BJ (cell line): ENCODE measurements at regions of chr1 and their contacts with region 1.

Region 1: DNA sequence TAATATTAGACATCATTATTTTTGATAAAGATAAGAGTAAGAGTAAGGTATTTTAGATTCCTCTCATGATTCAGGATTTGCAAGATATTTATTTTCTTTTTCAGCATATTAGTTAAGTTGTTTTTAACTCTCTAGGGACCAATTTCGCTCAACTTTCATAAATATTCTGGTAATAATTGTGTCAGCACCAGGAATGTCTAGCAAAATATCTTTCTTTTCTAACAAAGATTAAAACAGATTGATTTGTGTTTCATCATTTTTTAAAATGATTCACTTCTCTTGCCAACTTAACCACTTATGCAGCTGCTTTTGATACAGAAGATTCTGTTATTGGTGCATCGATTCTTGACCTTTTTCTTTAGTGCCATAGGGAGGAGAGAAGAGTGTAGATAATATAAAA is 172.8 kb upstream of the PTGFR start:
- DNase-seq: no peak
- H3K4me3 ChIP-seq: no peak overlapping the region
- H3K27me3 ChIP-seq: no peaks in the 10 kb centered on the region
- CTCF ChIP-seq: no peak

Region 2: DNA sequence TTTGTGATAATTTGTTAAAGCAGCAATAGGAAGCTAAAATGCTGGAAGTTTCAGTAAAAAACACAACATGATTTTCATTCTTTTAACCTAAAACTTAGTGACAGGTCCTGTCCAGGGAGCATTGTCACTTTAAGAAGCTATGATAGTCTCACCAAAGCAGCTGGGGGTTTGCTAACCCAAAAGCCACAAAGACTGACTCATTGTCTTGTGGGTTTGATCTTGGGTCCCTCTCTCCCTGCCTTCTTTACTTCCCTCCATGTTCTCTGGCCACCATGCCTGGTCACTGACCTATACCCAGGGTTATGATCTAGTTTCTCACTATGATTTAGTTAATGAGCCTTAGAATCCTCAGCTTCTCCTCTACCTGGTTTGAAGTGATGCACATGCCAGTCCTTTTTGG is 40.8 kb before region 1 on chr1:
- CTCF ChIA-PET with region 1: no interaction called
- POLR2A ChIA-PET with region 1: no interaction called
- DNase-seq: no peak
- H3K4me3 ChIP-seq: no peak overlapping the region
- H3K27me3 ChIP-seq: no peaks in the 10 kb centered on the region
- CTCF ChIP-seq: no peak

Region 3: GRCh38 chr1:78333502-78333901 is 15.5 kb after region 1 on chr1:
- CTCF ChIA-PET with region 1: interaction called, 10 read pairs
- POLR2A ChIA-PET with region 1: no interaction called
- DNase-seq: no peak
- H3K4me3 ChIP-seq: no peak overlapping the region
- H3K27me3 ChIP-seq: no peaks in the 10 kb centered on the region
- CTCF ChIP-seq: peak; percentile 71